ENCODE measurements at regions of chr5 and their contacts with region 1.

Region 1: GRCh38 chr5:36264202-36264760 is 22.6 kb upstream of the NADK2 start:
- DNase-seq: no peak
- H3K4me3 ChIP-seq: no peak overlapping the region
- H3K27ac ChIP-seq: no peak overlapping the region
- H3K4me1 ChIP-seq: no peaks in the 10 kb centered on the region
- H3K27me3 ChIP-seq: no peaks in the 10 kb centered on the region
- CTCF ChIP-seq: no peak
- POLR2A ChIP-seq: no peak

Region 2: DNA sequence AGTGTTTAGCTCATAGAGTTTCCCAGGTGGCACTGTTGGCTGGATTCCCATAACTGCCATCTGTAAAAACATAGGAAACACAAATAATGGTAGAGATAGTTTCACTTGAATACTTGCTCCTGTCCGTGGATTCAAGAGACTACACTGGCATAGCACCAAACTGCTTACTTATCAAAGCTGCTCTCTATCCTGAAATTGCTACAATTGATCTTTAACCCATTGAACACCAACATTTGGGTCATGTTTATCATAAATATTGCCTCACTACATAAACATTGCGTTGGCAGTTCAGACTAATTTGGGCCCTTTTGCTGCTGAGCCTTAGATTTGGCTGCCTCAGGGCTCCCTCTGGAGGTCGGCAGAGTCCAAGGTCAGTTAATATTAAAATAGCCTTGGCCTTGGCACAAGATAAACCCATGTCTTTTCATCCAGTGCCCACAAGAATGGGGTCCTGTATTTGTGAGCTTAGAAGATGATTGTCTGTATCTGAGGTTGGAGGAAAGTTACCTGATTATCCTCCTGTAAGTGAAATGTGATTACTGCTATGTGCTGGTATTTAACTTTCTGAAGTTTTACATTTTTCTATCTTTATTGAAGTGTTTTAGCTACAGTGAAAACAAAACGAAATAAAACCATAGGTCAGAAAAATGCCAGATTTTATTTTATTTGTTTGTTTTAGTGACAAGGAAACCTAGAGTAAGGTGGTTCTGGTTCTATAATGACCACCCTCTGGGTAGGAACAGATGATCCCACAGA is 41.5 kb after region 1 on chr5:
- intact Hi-C with region 1: loop called in 1 of 2 experiments (anchors 5 kb)
- DNase-seq: peak; percentile 32 to 80 (median 49)
- H3K4me3 ChIP-seq: no peak overlapping the region
- H3K27ac ChIP-seq: no peak overlapping the region
- H3K4me1 ChIP-seq: peaks cover 18 to 37% of the 10 kb centered on the region in 2 donors
- H3K27me3 ChIP-seq: no peaks in the 10 kb centered on the region
- CTCF ChIP-seq: peak; percentile 29 to 75 (median 58)
- POLR2A ChIP-seq: no peak

Region 3: DNA sequence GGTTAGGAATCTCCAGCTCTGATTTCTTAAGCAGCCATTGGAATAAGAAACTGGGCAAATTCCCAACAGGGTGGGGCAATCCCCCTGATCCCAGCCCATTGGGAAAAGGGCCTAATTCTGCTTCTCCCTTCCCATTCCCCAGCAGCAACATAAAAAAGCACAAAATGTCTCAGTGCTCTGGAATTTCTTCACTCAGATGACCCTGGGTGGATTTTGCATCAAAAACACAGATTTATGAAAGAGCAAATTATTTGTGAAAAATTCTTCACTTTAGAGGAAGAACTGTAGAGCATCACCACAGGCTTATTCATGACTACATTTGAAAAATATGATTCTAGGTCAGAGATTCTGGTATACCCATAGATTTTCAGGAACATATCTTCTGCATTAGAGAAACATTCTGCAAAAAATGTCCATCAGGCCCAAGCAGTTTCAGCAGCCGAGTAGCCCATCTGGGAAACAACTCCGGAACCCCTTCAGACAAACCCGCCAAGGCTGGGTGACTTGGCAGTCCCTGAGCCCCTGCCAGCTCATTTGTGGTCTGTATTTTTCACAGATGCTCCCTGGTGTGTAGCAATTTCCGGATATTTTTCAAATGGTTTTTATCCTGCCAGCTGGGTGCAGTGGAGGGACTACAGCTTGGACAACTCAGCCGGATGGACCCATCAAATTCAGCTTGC is 139.5 kb after region 1 on chr5:
- intact Hi-C with region 1: loop called (anchors 5 to 10 kb)
- DNase-seq: peak in 6 of 7 donors; percentile 18 to 65 (median 41)
- H3K4me3 ChIP-seq: no peak overlapping the region
- H3K27ac ChIP-seq: peak overlapping the region in 1 of 5 donors; percentile 83
- H3K4me1 ChIP-seq: no peaks in the 10 kb centered on the region
- H3K27me3 ChIP-seq: no peaks in the 10 kb centered on the region
- CTCF ChIP-seq: no peak
- POLR2A ChIP-seq: no peak

Measured in adrenal gland (tissue), 19 donors.